Aorta (tissue), 5 donors: ENCODE measurements at regions of chr6 and their contacts with region 1.

Region 1: DNA sequence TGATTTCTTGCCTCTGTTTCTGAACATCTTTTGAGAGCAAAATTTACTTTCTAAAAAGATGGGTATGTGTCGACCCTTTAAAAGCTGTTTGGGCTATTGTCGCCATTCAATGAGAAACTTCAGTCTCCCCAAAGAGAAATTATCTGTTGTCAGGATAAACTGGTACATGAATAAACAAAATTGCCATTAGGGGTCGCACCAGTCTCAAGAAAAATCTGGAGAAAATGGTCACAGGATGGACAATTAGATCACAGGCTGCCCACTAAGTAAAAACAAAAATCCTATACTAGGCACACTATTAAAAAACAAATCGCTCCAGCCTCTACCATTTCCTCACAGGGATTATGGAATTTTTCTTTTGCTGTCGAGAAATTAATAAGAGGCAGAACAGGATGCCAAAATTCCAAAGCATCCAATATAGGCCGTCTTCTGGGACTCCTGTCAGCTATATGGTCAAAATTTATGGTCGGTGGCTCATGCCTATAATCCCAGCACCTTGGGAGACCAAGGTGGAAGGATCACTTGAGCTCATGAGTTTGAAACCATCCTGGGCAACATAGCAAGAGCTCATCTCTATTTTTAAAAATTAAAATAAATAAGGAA is 5.5 kb upstream of the HLA-E start:
- DNase-seq: no peak
- ATAC-seq: no peak
- H3K4me3 ChIP-seq: no peak overlapping the region
- H3K27ac ChIP-seq: no peak overlapping the region
- H3K4me1 ChIP-seq: no peaks in the 10 kb centered on the region
- H3K27me3 ChIP-seq: no peaks in the 10 kb centered on the region

Region 2: GRCh38 chr6:30520522-30520921 is 36.7 kb after region 1 on chr6:
- intact Hi-C with region 1: no loop called
- DNase-seq: no peak
- ATAC-seq: no peak
- H3K4me3 ChIP-seq: no peak overlapping the region
- H3K27ac ChIP-seq: no peak overlapping the region
- H3K4me1 ChIP-seq: no peaks in the 10 kb centered on the region
- H3K27me3 ChIP-seq: no peaks in the 10 kb centered on the region

Region 3: GRCh38 chr6:30533460-30534294 is 49.9 kb after region 1 on chr6:
- intact Hi-C with region 1: loop called (anchors 2 to 5 kb)
- DNase-seq: no peak
- ATAC-seq: no peak
- H3K4me3 ChIP-seq: no peak overlapping the region
- H3K27ac ChIP-seq: no peak overlapping the region
- H3K4me1 ChIP-seq: no peaks in the 10 kb centered on the region
- H3K27me3 ChIP-seq: no peaks in the 10 kb centered on the region

Region 4: GRCh38 chr6:30590994-30591393 is 107.2 kb after region 1 on chr6:
- intact Hi-C with region 1: loop called in 1 of 2 experiments (anchors 2 kb)
- DNase-seq: no peak
- ATAC-seq: no peak
- H3K4me3 ChIP-seq: no peak overlapping the region
- H3K27ac ChIP-seq: no peak overlapping the region
- H3K4me1 ChIP-seq: no peaks in the 10 kb centered on the region
- H3K27me3 ChIP-seq: no peaks in the 10 kb centered on the region